H1 (cell line): ENCODE measurements at regions of chr12 and their contacts with region 1.

Region 1: DNA sequence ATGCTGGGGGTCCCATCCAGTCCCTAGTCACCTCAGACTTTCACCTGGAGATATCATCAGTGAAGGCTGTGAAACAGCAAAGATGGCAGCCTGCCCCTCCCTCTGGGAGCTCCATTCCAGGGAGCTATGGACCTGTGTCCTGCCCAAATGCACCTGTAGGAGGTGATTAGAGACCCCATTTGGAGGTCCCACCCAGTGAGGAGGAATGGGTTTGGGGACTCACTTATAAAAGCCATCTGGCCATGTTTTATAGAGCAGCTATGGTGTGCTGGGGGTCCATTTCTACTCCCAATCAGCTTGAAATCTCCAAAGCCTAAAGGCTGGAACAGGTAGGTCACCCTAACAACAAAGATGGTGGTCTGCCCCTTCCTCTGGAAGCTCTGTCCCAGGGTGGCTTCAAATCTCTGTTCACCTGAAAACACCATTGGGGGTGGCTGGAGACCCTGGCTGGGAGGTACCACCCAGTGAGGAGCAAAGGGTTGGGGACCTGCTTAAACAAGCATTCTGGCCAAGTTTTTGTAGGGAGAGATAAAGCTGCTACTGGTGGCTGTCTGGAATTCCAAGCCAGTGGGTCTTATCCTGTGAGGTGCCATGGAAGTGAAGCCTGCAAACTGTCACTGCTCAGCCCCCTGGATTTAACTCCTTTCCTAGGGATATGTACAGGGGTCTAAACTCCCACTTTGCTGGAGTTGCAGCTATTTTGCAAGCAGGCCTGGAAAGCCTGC is 182.3 kb downstream of the RASSF9 start:
- DNase-seq: no peak
- H3K4me3 ChIP-seq: no peak overlapping the region
- H3K27ac ChIP-seq: no peak overlapping the region
- H3K4me1 ChIP-seq: no peaks in the 10 kb centered on the region; a peak in 1 of 7 replicates
- H3K27me3 ChIP-seq: no peaks in the 10 kb centered on the region
- CTCF ChIP-seq: no peak
- EP300 ChIP-seq: no peak
- POLR2A ChIP-seq: no peak
- RAD21 ChIP-seq: no peak

Region 2: DNA sequence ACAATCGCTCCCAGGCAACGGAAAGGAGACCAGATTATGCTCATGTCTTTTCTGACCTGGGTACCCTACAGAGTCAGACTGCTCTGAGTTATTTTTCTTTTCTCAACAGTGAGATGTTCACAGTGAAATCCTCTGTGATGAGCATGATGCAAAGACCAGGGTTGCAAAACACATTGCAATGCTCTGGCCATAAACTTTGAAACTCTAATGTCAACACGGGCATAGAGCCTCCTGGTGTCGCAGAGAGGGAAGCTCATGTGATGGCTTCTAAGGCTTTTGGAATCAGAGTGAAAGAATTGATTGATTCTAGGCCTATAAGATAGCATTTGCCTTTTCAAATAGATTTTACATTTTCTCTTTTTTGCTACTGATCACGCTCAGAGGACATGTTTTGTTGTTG is 11.1 kb before region 1 on chr12:
- CTCF ChIA-PET with region 1: interaction called, 19 read pairs
- POLR2A ChIA-PET with region 1: no interaction called
- DNase-seq: no peak
- H3K4me3 ChIP-seq: no peak overlapping the region
- H3K27ac ChIP-seq: no peak overlapping the region
- H3K4me1 ChIP-seq: no peaks in the 10 kb centered on the region; a peak in 1 of 7 replicates
- H3K27me3 ChIP-seq: no peaks in the 10 kb centered on the region
- CTCF ChIP-seq: peak in 2 of 3 experiments; percentile 44 to 61; a peak in 3 of 4 replicates
- EP300 ChIP-seq: no peak
- POLR2A ChIP-seq: no peak
- RAD21 ChIP-seq: peak; percentile 49 to 61